ENCODE measurements at regions of chr17 and their contacts with region 1.

Region 1: GRCh38 chr17:64129764-64130558 is at the start of gene ERN1:
- DNase-seq: peak; percentile 88
- H3K4me3 Mint-ChIP-seq: peak within 1 kb of the TSS; percentile 98
- H3K27ac Mint-ChIP-seq: peak within 1 kb of the TSS; percentile 93
- H3K4me1 Mint-ChIP-seq: peaks cover 68% of the 10 kb centered on the region
- H3K27me3 Mint-ChIP-seq: no peaks in the 10 kb centered on the region
- total RNA-seq, gene ERN1: 90.0 and 91.6 TPM in 2 replicates

Region 2: GRCh38 chr17:63919311-63919723 is 210.6 kb before region 1 on chr17:
- intact Hi-C with region 1: loop called (anchors 1 kb)
- DNase-seq: peak; percentile 65
- H3K4me3 Mint-ChIP-seq: no peak overlapping the region
- H3K27ac Mint-ChIP-seq: no peak overlapping the region
- H3K4me1 Mint-ChIP-seq: peaks cover 7% of the 10 kb centered on the region
- H3K27me3 Mint-ChIP-seq: peaks cover 8% of the 10 kb centered on the region

Region 3: DNA sequence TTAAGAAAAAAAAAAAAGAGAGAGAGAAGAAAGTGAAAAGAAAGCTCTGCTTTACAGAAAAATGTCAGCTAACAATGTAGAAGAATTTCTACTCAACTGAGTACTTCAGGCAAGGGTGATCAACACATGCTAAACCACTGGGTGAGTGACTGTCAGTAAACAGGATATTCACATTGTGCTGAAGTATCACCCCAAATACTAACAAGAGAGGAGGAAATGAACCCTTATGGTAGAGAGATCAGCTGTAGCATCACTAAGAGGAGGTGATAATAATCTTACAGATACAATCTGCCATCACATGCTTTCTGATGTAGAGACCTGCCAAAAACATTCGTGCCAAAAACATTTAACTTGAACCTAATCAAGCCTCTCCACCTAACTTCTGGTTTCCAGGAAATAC is 78.8 kb before region 1 on chr17:
- intact Hi-C with region 1: loop called (anchors 1 kb)
- DNase-seq: peak; percentile 38
- H3K4me3 Mint-ChIP-seq: peak overlapping the region; percentile 16
- H3K27ac Mint-ChIP-seq: peak overlapping the region; percentile 84
- H3K4me1 Mint-ChIP-seq: peaks cover 46% of the 10 kb centered on the region
- H3K27me3 Mint-ChIP-seq: no peaks in the 10 kb centered on the region

Region 4: GRCh38 chr17:64091116-64091515 is 38.8 kb before region 1 on chr17:
- intact Hi-C with region 1: loop called (anchors 1 kb)
- DNase-seq: peak; percentile 20
- H3K4me3 Mint-ChIP-seq: peak overlapping the region; percentile 81
- H3K27ac Mint-ChIP-seq: peak overlapping the region; percentile 98
- H3K4me1 Mint-ChIP-seq: peaks cover 89% of the 10 kb centered on the region
- H3K27me3 Mint-ChIP-seq: no peaks in the 10 kb centered on the region

Region 5: GRCh38 chr17:64103391-64104364 is 26.3 kb before region 1 on chr17:
- intact Hi-C with region 1: no loop called
- DNase-seq: no peak
- H3K4me3 Mint-ChIP-seq: peak overlapping the region; percentile 19
- H3K27ac Mint-ChIP-seq: peak overlapping the region; percentile 40
- H3K4me1 Mint-ChIP-seq: peaks cover 81% of the 10 kb centered on the region
- H3K27me3 Mint-ChIP-seq: no peaks in the 10 kb centered on the region

Region 6: GRCh38 chr17:64245218-64246145 is 115.5 kb after region 1 on chr17:
- intact Hi-C with region 1: no loop called
- DNase-seq: no peak
- H3K4me3 Mint-ChIP-seq: no peak overlapping the region
- H3K27ac Mint-ChIP-seq: no peak overlapping the region
- H3K4me1 Mint-ChIP-seq: no peaks in the 10 kb centered on the region
- H3K27me3 Mint-ChIP-seq: no peaks in the 10 kb centered on the region

Region 7: GRCh38 chr17:64262417-64263260 is 132.7 kb after region 1 on chr17 and contains the start of gene TEX2:
- intact Hi-C with region 1: loop called (anchors 1 kb)
- DNase-seq: peak; percentile 57
- H3K4me3 Mint-ChIP-seq: peak within 1 kb of the TSS; percentile 94
- H3K27ac Mint-ChIP-seq: peak within 1 kb of the TSS; percentile 98
- H3K4me1 Mint-ChIP-seq: peaks cover 37% of the 10 kb centered on the region
- H3K27me3 Mint-ChIP-seq: peaks cover 21% of the 10 kb centered on the region
- total RNA-seq, gene TEX2: 20.6 and 21.9 TPM in 2 replicates